Activated CD4-positive, alpha-beta T cell treated with anti-CD3 and anti-CD28 coated beads for 36 hours (primary cell): ENCODE measurements at regions of chr5 and their contacts with region 1.

Region 1: GRCh38 chr5:111278845-111279504 is 54.8 kb downstream of the CAMK4 start:
- DNase-seq: peak; percentile 93
- ATAC-seq: peak; percentile 97
- H3K4me3 Mint-ChIP-seq: no peak overlapping the region
- H3K27ac Mint-ChIP-seq: peak overlapping the region; percentile 79
- H3K4me1 Mint-ChIP-seq: peaks cover 69% of the 10 kb centered on the region
- H3K27me3 Mint-ChIP-seq: no peaks in the 10 kb centered on the region

Region 2: DNA sequence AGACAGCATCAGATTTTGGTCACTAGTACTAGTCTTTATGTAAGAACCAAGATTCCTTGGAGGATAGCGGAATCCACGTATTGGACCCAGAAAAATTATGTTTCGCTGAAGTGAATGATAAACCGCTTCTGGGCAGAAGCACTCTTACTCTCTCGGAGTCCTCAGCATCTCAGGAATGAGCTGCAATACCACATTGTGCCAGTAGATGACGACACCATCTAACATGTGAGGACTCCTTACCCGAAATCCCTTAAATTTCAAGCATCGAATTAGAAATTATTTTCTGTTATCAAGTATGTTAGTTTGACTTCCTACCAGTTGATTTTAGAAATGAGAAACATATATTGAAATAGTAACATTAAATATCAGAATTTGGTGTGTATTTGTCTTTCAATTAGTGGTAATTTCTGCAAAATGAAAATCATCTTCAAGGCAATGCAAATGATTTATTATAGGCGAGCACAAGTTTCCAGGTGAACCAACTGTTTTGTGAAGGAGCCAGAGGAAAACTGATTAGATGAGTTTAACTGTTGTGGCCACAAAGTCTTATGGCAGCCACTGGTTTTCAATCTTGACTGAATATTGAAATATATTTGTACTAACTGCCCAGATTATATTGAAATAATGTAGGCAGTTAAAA is 120.8 kb before region 1 on chr5:
- CTCF ChIA-PET with region 1: interaction called, 82 read pairs
- POLR2A ChIA-PET with region 1: interaction called, 3 read pairs
- intact Hi-C with region 1: loop called (anchors 1 kb)
- DNase-seq: peak; percentile 88
- ATAC-seq: peak; percentile 67
- H3K4me3 Mint-ChIP-seq: no peak overlapping the region
- H3K27ac Mint-ChIP-seq: no peak overlapping the region
- H3K4me1 Mint-ChIP-seq: peaks cover 11% of the 10 kb centered on the region
- H3K27me3 Mint-ChIP-seq: no peaks in the 10 kb centered on the region

Region 3: GRCh38 chr5:111229871-111230810 is 48.8 kb before region 1 on chr5:
- CTCF ChIA-PET with region 1: interaction called, 35 read pairs
- POLR2A ChIA-PET with region 1: no interaction called
- intact Hi-C with region 1: no loop called
- DNase-seq: peak; percentile 36
- ATAC-seq: peak; percentile 49
- H3K4me3 Mint-ChIP-seq: peak overlapping the region; percentile 69
- H3K27ac Mint-ChIP-seq: peak overlapping the region; percentile 96
- H3K4me1 Mint-ChIP-seq: peaks cover 71% of the 10 kb centered on the region
- H3K27me3 Mint-ChIP-seq: no peaks in the 10 kb centered on the region

Region 4: GRCh38 chr5:111266491-111266890 is 12.5 kb before region 1 on chr5:
- CTCF ChIA-PET with region 1: interaction called, 24 read pairs
- POLR2A ChIA-PET with region 1: no interaction called
- intact Hi-C with region 1: no loop called
- DNase-seq: no peak
- ATAC-seq: no peak
- H3K4me3 Mint-ChIP-seq: no peak overlapping the region
- H3K27ac Mint-ChIP-seq: peak overlapping the region; percentile 65
- H3K4me1 Mint-ChIP-seq: peaks cover 57% of the 10 kb centered on the region
- H3K27me3 Mint-ChIP-seq: no peaks in the 10 kb centered on the region

Region 5: DNA sequence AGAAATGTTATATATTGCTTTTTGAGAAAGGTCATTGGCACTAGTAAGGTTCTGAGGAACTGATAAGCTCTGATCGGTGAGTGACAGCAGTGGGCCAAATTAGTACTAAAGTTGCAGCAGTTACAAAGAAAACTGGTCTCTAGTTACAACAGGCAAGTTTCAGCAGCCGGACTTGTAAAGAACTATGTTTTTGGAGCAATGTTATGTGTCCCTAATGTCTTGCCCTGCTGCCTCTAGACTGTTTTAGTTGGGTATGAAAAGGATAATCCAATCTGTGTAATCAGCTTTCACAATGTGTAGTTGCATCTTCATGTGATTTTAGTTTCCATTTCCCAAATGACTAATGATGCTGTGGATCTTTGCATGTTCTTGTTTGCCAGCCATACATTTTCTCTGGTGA is 58.7 kb after region 1 on chr5:
- CTCF ChIA-PET with region 1: interaction called, 3 read pairs
- POLR2A ChIA-PET with region 1: no interaction called
- intact Hi-C with region 1: loop called in 1 of 2 experiments (anchors 2 kb)
- DNase-seq: no peak
- ATAC-seq: peak; percentile 88
- H3K4me3 Mint-ChIP-seq: peak overlapping the region; percentile 20
- H3K27ac Mint-ChIP-seq: peak overlapping the region; percentile 87
- H3K4me1 Mint-ChIP-seq: peaks cover 77% of the 10 kb centered on the region
- H3K27me3 Mint-ChIP-seq: no peaks in the 10 kb centered on the region

Region 6: GRCh38 chr5:111757355-111758283 is 478.6 kb after region 1 on chr5:
- CTCF ChIA-PET with region 1: no interaction called
- POLR2A ChIA-PET with region 1: no interaction called
- intact Hi-C with region 1: no loop called
- DNase-seq: peak; percentile 91
- ATAC-seq: peak; percentile 78
- H3K4me3 Mint-ChIP-seq: peak overlapping the region; percentile 80
- H3K27ac Mint-ChIP-seq: peak overlapping the region; percentile 86
- H3K4me1 Mint-ChIP-seq: peaks cover 18% of the 10 kb centered on the region
- H3K27me3 Mint-ChIP-seq: peaks cover 3% of the 10 kb centered on the region